ENCODE measurements at regions of chr6 and their contacts with region 1.

Region 1: DNA sequence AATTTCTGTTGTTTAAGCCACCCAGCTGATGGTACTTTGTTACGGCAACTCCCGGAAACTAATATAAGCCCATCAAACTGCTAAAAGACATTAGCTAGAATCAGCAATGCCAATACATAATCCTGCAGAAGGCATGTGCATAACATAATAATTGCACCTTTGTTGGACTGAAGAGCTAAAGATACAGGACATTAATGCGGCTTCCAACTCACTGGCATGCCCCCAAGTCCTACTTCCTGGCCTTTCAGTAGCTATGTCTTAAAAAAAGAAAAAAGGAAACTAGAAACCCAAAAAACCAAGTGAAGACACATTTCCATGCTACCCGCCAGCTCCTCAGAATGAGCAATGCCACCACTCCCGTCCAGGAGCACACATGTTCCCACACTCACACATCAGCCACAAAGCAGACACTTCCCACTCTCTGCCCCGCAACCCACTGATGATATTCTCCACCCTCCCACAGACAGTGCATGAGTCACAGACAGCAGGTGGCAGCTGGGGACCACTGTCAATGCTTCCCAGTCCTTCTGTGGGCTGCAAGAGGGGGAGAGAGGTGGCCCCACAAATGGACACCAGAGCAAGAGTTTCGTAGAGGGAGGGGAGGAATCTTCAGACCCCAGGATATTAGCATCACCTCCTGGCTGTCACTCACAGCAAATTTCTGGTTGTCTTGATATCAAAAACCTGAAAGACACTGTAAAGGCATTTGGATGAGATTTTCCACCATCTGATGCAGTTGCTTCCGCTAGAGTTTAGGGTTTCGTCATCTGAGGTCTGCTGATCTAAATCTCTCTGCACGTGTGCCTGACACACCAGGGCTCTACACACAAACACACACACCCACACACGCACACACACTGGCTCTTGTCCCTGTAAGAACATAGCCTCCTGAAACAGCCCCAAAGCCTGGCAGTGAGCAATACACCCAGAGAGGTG is 32.8 kb downstream of the GFOD1 start:
- DNase-seq: peak in 1 of 4 experiments; percentile 38
- ATAC-seq: peak; percentile 80
- H3K4me3 ChIP-seq: no peak overlapping the region
- H3K27ac ChIP-seq: no peak overlapping the region
- H3K4me1 ChIP-seq: peaks cover 6 to 11% of the 10 kb centered on the region in 2 experiments; a peak in 4 of 5 replicates
- H3K27me3 ChIP-seq: no peaks in the 10 kb centered on the region; a peak in 1 of 5 replicates
- CTCF ChIP-seq: peak; percentile 28 to 45 (median 42); a peak in 3 of 6 replicates
- EP300 ChIP-seq: no peak
- POLR2A ChIP-seq: no peak
- RAD21 ChIP-seq: peak; percentile 69 to 72

Region 2: DNA sequence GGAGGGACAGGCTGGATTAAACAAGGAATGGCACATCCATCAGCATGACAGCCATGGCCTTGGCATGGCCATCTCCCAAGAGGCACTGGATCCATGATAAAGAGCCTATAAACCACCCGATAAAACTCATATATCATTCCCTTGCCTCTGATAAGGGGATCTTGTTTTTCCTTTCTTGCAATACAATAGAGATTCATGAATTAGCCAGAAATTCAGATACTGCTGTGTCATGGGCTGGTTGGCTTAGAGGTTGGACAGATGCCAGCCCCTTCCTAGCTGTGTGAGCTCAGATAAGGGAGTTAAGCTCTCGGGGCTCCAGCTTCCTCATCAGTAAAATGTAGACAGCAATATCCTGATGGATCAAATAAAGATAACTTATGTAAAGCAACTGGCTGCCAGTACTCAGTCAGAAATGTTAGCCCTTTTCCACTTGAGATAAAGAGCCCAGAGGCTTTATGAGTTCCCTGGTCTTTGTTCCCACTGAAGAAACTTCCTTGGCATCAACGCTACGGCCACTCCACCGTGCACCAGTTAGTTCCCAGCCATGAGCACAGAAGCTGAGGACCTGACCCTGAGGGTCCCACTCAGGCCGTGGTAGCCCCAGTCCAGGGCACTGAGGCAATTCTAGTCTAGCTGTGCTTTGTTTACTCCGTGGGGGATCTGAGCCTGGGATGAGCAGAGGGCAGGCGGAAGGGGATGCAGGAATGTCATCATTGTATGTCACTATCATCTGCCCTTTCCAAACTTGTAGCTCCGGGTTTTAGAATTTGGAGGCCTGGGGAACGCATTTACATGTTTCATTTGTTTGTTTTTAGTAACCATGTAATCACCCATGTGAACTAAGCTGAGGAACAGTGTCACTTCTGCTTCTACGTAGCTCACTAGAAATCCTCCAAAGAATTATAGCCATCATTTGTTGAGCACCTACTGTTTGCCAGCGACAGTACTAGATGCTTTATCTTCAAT is 59.0 kb before region 1 on chr6:
- CTCF ChIA-PET with region 1: no interaction called
- POLR2A ChIA-PET with region 1: no interaction called
- in situ Hi-C with region 1: no loop called
- intact Hi-C with region 1: loop called (anchors 5 kb)
- DNase-seq: peak; percentile 75 to 98 (median 82)
- ATAC-seq: peak; percentile 95
- H3K4me3 ChIP-seq: no peak overlapping the region
- H3K27ac ChIP-seq: peak overlapping the region; percentile 65; the same call in 2 of the 3 replicates
- H3K4me1 ChIP-seq: peaks cover 13 to 24% of the 10 kb centered on the region in 2 experiments
- H3K27me3 ChIP-seq: peaks cover 0 to 6% of the 10 kb centered on the region in 2 experiments; a peak in 1 of 5 replicates
- CTCF ChIP-seq: no peak
- EP300 ChIP-seq: peak; percentile 94
- POLR2A ChIP-seq: no peak
- RAD21 ChIP-seq: no peak; a peak in 2 of 4 replicates

Region 3: DNA sequence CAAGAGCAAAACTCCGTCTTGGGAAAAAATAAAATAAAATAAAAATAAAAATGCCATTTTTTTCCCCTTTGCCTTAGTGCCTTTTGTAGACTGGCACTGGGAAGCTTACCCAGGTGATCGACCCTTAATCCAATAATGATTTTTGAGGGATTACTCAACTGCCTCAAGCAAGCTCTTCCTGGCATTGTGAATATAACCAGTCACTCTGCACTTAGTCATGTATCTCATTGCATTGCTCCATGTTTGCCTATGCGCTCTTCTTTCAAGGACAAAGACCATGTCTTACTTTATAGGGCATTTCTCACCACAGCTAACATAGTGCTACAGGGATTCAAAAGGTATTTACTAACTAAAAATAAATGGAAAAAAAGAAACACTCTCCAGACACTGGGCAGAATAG is 19.8 kb after region 1 on chr6:
- CTCF ChIA-PET with region 1: no interaction called
- POLR2A ChIA-PET with region 1: no interaction called
- in situ Hi-C with region 1: no loop called
- intact Hi-C with region 1: no loop called
- DNase-seq: no peak
- ATAC-seq: no peak
- H3K4me3 ChIP-seq: no peak overlapping the region
- H3K27ac ChIP-seq: no peak overlapping the region
- H3K4me1 ChIP-seq: peaks cover 3 to 10% of the 10 kb centered on the region in 2 experiments; a peak in 4 of 5 replicates
- H3K27me3 ChIP-seq: no peaks in the 10 kb centered on the region
- CTCF ChIP-seq: no peak
- EP300 ChIP-seq: no peak
- POLR2A ChIP-seq: no peak
- RAD21 ChIP-seq: no peak

Region 4: GRCh38 chr6:13538084-13538483 is 83.5 kb after region 1 on chr6:
- CTCF ChIA-PET with region 1: interaction called, 3 read pairs
- POLR2A ChIA-PET with region 1: no interaction called
- in situ Hi-C with region 1: no loop called
- intact Hi-C with region 1: loop called (anchors 2 kb)
- DNase-seq: peak; percentile 33 to 50 (median 46)
- ATAC-seq: peak; percentile 74
- H3K4me3 ChIP-seq: no peak overlapping the region
- H3K27ac ChIP-seq: no peak overlapping the region
- H3K4me1 ChIP-seq: peaks cover 0 to 4% of the 10 kb centered on the region in 2 experiments; a peak in 1 of 5 replicates
- H3K27me3 ChIP-seq: peaks cover 9 to 16% of the 10 kb centered on the region in 2 experiments; a peak in 3 of 5 replicates
- CTCF ChIP-seq: peak; percentile 32 to 59 (median 39); a peak in 3 of 6 replicates
- EP300 ChIP-seq: no peak
- POLR2A ChIP-seq: no peak
- RAD21 ChIP-seq: peak; percentile 77 to 82

Measured in K562 (cell line).